HEK293 (cell line): ENCODE measurements at regions of chr14 and their contacts with region 1.

Region 1: DNA sequence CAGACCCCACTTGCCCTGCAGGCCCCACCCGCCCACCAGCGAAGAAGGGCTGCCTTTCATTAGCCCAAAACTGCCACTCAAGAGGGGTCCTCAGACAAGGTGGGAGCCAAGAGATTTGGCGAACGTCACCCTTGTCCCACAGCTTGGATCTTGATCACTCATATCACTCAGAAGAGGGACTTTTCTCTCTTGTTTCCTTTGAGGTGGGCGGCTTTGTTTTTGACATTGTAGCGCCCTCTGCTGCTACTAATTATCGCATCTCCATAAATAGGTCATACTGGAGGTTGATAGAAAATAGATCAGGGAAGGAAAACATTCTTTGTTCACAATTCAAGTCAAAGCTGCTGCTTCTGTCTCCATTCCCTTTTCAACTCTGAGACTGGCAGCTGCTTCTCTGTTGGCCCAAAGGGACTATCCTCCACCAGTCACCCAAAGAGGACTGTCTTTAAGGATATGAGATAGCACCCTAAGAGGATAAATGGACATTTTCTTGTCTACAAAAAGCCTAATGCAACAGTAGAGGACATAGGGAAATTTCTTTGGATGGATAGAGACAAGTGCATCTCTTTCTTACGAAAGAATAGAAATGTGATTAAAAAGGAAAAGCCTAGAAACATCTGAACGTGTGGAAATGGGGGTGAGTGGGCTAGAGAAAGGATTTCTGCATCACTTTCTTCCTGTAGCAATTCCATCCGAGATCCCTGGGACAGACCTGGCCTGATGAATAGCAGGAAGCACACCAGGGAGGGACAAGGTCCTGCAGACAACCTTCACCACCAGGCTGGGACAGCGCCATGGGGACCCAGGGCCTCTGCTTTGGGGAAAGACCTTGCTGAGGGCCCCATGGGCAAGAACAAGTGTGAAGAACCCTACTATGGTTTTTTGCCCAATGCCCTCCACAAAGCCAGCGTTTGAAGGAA is 115.8 kb downstream of the DAD1 start:
- H3K4me3 ChIP-seq: no peak overlapping the region
- H3K27ac ChIP-seq: no peak overlapping the region
- H3K4me1 ChIP-seq: no peaks in the 10 kb centered on the region; the same call in 1 of the 2 replicates
- CTCF ChIP-seq: peak; percentile 63; the same call in 1 of the 2 replicates

Region 2: DNA sequence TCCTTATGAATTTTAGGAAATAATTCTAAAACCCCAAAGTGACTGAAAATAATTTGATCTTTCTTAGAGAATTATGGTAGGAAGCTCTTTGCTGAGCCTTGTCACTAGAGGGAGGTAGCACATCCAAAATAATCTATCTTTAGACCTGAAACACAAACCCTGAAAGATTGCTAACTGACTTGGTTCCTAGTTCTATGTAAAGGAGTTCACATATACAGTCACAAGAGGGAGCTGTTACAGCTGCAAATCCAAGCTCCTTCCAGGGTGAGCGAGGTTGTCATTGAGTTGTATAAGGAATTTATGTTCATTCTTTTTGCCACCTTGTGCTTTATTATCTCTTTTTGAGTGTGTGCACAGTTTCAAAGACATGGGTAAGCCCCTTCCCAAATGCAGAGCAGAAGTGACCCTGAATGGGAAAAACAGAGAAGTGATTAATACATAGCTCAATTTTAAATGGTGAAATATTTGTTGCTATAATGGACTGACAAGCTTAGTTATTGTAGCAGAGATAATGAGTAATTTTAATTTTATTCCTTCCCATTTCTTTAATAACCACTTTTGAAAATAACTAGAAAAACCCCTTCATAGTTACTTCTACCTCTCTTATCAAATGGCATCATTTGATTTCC is 272.1 kb before region 1 on chr14:
- CTCF ChIA-PET with region 1: interaction called, 12 read pairs
- POLR2A ChIA-PET with region 1: no interaction called
- H3K4me3 ChIP-seq: no peak overlapping the region
- H3K27ac ChIP-seq: no peak overlapping the region
- H3K4me1 ChIP-seq: no peaks in the 10 kb centered on the region
- CTCF ChIP-seq: no peak

Region 3: GRCh38 chr14:22380571-22381407 is 92.4 kb before region 1 on chr14:
- CTCF ChIA-PET with region 1: interaction called, 30 read pairs
- POLR2A ChIA-PET with region 1: no interaction called
- H3K4me3 ChIP-seq: no peak overlapping the region
- H3K27ac ChIP-seq: no peak overlapping the region
- H3K4me1 ChIP-seq: no peaks in the 10 kb centered on the region
- CTCF ChIP-seq: no peak

Region 4: DNA sequence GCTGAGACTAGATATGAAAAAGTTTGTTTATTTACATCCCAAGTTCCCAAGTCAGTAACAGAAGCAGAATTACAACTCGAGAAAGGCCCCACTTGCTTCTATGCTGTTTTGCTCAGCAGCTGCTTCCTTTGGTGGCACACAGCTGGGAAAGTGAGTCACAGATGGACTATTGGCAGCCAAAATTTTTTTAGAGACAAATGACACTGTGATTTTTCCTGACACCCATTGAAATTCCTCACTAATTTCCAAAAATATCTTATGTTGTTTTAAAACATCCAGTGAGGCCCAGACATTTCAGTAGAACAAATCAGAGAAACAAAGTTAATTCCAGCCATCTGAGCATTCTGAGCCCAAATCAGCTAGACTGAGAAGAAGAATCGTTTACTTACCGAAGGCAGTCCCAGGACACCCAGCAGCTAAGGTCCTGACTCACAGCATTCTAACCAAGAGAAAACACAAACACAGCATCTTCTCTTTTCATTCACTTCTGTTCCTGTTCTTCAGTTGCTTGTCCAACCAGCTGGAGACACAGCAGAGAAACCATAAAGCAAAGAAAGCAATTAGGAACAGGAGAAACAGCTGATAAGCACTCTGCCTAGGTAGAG is 72.4 kb before region 1 on chr14:
- CTCF ChIA-PET with region 1: interaction called, 209 read pairs
- POLR2A ChIA-PET with region 1: no interaction called
- H3K4me3 ChIP-seq: no peak overlapping the region
- H3K27ac ChIP-seq: no peak overlapping the region
- H3K4me1 ChIP-seq: no peaks in the 10 kb centered on the region
- CTCF ChIP-seq: no peak

Region 5: GRCh38 chr14:22448905-22449599 is 24.1 kb before region 1 on chr14:
- CTCF ChIA-PET with region 1: interaction called, 15 read pairs
- POLR2A ChIA-PET with region 1: no interaction called
- H3K4me3 ChIP-seq: no peak overlapping the region
- H3K27ac ChIP-seq: no peak overlapping the region
- H3K4me1 ChIP-seq: no peaks in the 10 kb centered on the region
- CTCF ChIP-seq: no peak